ENCODE measurements at regions of chr14 and their contacts with region 1.

Region 1: DNA sequence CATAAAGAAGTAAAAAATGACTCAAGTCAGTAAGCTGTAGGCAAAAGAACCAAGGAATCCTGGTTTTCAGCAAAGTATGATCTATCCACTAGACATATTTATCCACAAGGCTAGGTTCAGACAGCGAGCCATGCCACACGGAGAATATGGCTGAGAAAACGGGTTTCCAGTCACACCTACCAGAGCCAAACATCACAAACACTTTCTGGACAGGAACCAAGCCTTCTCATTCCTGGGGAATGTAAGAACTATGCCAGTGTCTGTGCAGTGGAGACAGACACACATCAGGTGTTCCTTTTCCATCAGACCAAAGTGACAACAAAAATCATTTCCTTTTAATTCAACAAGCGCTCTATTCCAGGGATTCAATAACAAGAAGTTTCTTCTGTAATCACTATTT is 41.1 kb downstream of the AREL1 start:
- DNase-seq: no peak
- CTCF ChIP-seq: no peak

Region 2: GRCh38 chr14:75461755-75462349 is 790.1 kb after region 1 on chr14:
- CTCF ChIA-PET with region 1: no interaction called
- POLR2A ChIA-PET with region 1: interaction called, 10 read pairs
- DNase-seq: no peak
- CTCF ChIP-seq: no peak